ENCODE measurements at regions of chr4 and their contacts with region 1.

Region 1: DNA sequence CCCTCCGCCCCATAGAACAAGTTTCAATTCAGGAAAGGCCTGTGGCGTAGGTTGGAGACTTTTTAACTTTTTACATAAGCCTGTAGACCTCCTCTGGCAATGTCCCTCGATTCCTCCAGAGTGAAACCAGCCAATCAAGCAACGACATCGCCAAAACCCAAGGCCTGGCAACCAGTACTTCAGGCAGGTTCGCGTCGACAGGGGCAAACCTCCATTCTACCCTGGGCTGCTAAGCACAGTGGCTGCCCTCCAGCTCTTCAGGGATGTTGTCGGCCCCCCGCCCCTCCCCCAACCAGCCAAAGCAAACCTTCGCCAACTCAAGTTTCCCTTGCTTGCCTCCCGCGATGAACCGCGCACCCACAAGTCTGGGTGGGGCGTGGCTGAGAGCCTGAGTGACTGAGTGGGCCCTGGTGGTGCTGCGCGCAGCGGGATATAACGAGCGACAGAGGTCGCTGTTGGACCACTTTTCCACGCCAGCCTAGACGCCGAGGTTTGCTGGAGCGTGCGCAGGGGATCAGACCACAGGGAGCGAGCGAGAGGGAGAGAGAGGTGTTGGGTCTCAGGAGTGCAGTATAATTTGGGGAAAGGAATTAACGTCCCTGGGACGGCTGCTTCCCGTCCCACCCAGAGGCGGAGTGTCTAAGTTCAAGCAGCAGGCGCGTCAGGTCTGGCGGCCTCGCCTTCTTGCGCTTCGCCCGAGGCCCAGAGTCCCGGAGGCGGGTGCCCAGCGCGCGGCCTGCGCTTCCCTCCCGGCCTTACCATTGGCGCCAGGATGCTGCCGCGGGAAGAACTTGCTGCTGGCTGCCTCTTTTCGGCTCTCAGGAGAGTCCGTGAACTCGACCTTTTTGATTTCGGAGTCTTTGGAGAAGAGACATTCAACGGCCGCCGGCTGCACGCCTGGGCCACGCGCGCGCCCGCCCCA is 9.0 kb upstream of the PITX2 start:
- DNase-seq: peak; percentile 54
- ATAC-seq: peak; percentile 99
- H3K4me3 ChIP-seq: peak overlapping the region in 1 of 3 experiments; percentile 46; a peak in 1 of 6 replicates
- H3K27ac ChIP-seq: no peak overlapping the region
- H3K4me1 ChIP-seq: 0 out of 2 replicates have a peak, but pooled peaks cover 4% of the 10 kb centered on the region
- H3K27me3 ChIP-seq: peaks cover 2 to 74% of the 10 kb centered on the region in 2 experiments
- CTCF ChIP-seq: peak; percentile 96
- EP300 ChIP-seq: no peak
- POLR2A ChIP-seq: no peak
- RAD21 ChIP-seq: peak; percentile 95

Region 2: GRCh38 chr4:110224812-110225211 is 407.0 kb before region 1 on chr4:
- CTCF ChIA-PET with region 1: no interaction called
- POLR2A ChIA-PET with region 1: no interaction called
- in situ Hi-C with region 1: no loop called
- intact Hi-C with region 1: no loop called
- DNase-seq: no peak
- ATAC-seq: no peak
- H3K4me3 ChIP-seq: no peak overlapping the region
- H3K27ac ChIP-seq: no peak overlapping the region
- H3K4me1 ChIP-seq: no peaks in the 10 kb centered on the region
- H3K27me3 ChIP-seq: no peaks in the 10 kb centered on the region
- CTCF ChIP-seq: no peak
- EP300 ChIP-seq: no peak
- POLR2A ChIP-seq: no peak
- RAD21 ChIP-seq: no peak

Region 3: DNA sequence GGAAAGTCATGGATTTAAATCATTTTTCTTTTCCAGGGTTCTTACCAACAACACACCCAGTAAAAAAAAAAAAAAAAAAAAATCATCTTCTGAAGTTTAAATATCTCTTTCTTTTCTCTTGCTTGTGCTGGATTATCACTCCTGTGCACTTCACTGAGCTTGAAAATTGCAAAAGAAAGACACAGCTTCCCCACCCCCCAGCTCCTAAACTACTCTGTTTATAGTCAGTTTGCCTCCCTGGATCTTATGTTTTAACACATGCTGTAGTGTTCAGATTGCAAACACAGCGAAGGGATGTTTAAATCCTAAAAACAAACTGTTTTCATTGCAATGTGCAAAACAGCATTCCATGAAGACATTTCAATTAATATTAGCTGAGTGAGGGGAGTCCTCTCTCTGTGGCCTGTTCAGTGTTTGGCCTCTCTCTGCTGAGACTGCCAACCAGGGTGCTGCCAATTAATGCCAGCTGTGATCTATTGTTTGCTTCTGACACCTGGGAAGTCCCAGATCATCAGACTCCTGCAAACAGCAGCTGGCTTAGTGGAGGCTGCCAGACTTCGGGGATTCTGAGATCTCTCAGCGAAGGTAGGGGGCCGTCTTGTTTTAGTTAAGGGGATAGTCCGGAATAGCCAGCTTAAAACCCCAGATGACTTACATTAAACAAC is 162.2 kb after region 1 on chr4:
- CTCF ChIA-PET with region 1: no interaction called
- POLR2A ChIA-PET with region 1: no interaction called
- in situ Hi-C with region 1: no loop called
- intact Hi-C with region 1: no loop called
- DNase-seq: no peak
- ATAC-seq: no peak
- H3K4me3 ChIP-seq: no peak overlapping the region
- H3K27ac ChIP-seq: no peak overlapping the region
- H3K4me1 ChIP-seq: no peaks in the 10 kb centered on the region
- H3K27me3 ChIP-seq: no peaks in the 10 kb centered on the region; a peak in 1 of 5 replicates
- CTCF ChIP-seq: no peak
- EP300 ChIP-seq: no peak
- POLR2A ChIP-seq: no peak
- RAD21 ChIP-seq: no peak

Region 4: DNA sequence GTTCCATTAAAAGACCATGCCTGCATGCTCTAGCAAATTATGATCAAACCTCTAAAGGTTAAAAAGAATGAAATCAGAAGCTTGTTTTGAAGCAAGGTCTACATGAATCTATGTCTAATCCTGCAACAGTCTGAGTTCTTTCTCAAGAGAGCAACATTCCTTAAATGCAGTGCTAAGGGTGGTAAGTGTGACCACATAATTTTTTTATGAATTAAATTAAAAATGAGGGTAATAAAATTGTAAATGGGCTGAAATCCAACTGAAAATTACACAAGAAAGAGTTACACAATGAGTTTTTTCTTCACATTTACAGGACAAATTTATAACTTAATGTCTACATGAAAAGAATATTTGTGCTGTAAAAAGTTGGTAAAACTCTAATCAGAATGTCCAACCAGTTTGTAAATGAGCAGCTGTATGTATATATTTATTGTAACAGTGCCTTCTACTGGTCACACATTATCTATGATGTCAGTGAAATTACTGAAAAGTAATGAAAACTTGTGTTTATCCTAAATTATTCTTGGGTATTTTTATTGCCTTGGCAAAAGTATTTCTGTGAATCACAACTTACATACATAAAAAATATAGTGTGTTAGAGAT is 327.3 kb after region 1 on chr4:
- CTCF ChIA-PET with region 1: interaction called, 5 read pairs
- POLR2A ChIA-PET with region 1: no interaction called
- in situ Hi-C with region 1: no loop called
- intact Hi-C with region 1: loop called (anchors 2 kb)
- DNase-seq: peak; percentile 1
- ATAC-seq: no peak
- H3K4me3 ChIP-seq: no peak overlapping the region
- H3K27ac ChIP-seq: no peak overlapping the region
- H3K4me1 ChIP-seq: no peaks in the 10 kb centered on the region
- H3K27me3 ChIP-seq: no peaks in the 10 kb centered on the region
- CTCF ChIP-seq: peak; percentile 23; the same call in 1 of the 2 replicates
- EP300 ChIP-seq: no peak
- POLR2A ChIP-seq: no peak
- RAD21 ChIP-seq: no peak

Region 5: GRCh38 chr4:110970642-110971041 is 338.8 kb after region 1 on chr4:
- CTCF ChIA-PET with region 1: interaction called, 9 read pairs
- POLR2A ChIA-PET with region 1: no interaction called
- in situ Hi-C with region 1: loop called (anchors 5 kb)
- intact Hi-C with region 1: loop called (anchors 1 kb)
- DNase-seq: peak; percentile 49
- ATAC-seq: peak; percentile 84
- H3K4me3 ChIP-seq: no peak overlapping the region
- H3K27ac ChIP-seq: no peak overlapping the region
- H3K4me1 ChIP-seq: no peaks in the 10 kb centered on the region
- H3K27me3 ChIP-seq: no peaks in the 10 kb centered on the region
- CTCF ChIP-seq: peak; percentile 53
- EP300 ChIP-seq: no peak
- POLR2A ChIP-seq: no peak
- RAD21 ChIP-seq: no peak

Region 6: GRCh38 chr4:111283061-111283677 is 651.3 kb after region 1 on chr4:
- CTCF ChIA-PET with region 1: interaction called, 21 read pairs
- POLR2A ChIA-PET with region 1: no interaction called
- in situ Hi-C with region 1: loop called (anchors 5 kb)
- intact Hi-C with region 1: loop called (anchors 1 kb)
- DNase-seq: peak; percentile 39
- ATAC-seq: peak; percentile 38; the same call in 1 of the 3 replicates
- H3K4me3 ChIP-seq: no peak overlapping the region
- H3K27ac ChIP-seq: no peak overlapping the region
- H3K4me1 ChIP-seq: no peaks in the 10 kb centered on the region
- H3K27me3 ChIP-seq: no peaks in the 10 kb centered on the region
- CTCF ChIP-seq: peak; percentile 71
- EP300 ChIP-seq: no peak
- POLR2A ChIP-seq: no peak
- RAD21 ChIP-seq: no peak

Region 7: GRCh38 chr4:111631215-111631999 is 999.6 kb after region 1 on chr4:
- CTCF ChIA-PET with region 1: interaction called, 5 read pairs
- POLR2A ChIA-PET with region 1: no interaction called
- in situ Hi-C with region 1: loop called (anchors 5 kb)
- intact Hi-C with region 1: no loop called
- DNase-seq: no peak
- ATAC-seq: no peak; the same call in 2 of the 3 replicates
- H3K4me3 ChIP-seq: no peak overlapping the region
- H3K27ac ChIP-seq: no peak overlapping the region
- H3K4me1 ChIP-seq: no peaks in the 10 kb centered on the region
- H3K27me3 ChIP-seq: no peaks in the 10 kb centered on the region
- CTCF ChIP-seq: no peak
- EP300 ChIP-seq: no peak
- POLR2A ChIP-seq: no peak
- RAD21 ChIP-seq: no peak

Region 8: DNA sequence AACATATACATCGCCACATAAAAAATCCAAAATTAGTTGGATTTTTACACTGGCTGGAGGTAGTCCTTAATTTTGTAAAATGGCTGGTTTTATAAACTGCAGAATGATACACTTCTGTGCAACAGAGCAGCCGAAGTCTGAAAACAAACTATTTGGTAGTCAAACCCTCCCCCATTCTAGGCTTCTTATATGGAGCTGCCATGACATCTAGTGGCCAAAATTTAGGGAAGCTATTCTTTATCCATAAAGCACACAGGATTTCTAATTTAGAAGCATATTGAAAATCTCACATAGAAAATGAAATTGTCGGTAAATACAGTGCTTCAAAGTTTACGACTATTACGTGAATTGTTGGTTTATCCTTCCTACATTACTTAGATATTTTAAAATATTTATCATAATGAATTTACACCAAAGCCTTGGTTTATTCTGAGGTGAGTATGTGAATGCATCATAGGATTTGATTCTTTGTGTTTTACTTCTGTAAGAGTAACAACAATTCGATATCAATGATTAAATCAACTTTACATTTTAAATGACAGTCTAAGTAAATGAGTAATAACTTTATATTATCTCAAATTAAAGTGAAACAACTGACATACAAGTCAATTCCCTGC is 1400.0 kb after region 1 on chr4:
- CTCF ChIA-PET with region 1: no interaction called
- POLR2A ChIA-PET with region 1: no interaction called
- in situ Hi-C with region 1: no loop called
- intact Hi-C with region 1: loop called (anchors 5 kb)
- DNase-seq: peak; percentile 25
- ATAC-seq: peak; percentile 72
- H3K4me3 ChIP-seq: no peak overlapping the region
- H3K27ac ChIP-seq: no peak overlapping the region
- H3K4me1 ChIP-seq: no peaks in the 10 kb centered on the region
- H3K27me3 ChIP-seq: no peaks in the 10 kb centered on the region
- CTCF ChIP-seq: peak; percentile 73
- EP300 ChIP-seq: no peak
- POLR2A ChIP-seq: no peak
- RAD21 ChIP-seq: peak; percentile 54

Measured in HepG2 (cell line).